ENCODE measurements at regions of chr20 and their contacts with region 1.

Region 1: GRCh38 chr20:60024801-60025200 is 66.6 kb downstream of the CDH26 start:
- DNase-seq: no peak
- H3K4me3 ChIP-seq: no peak overlapping the region
- H3K27ac ChIP-seq: no peak overlapping the region
- H3K4me1 ChIP-seq: 0 out of 7 replicates have a peak, but pooled peaks cover 0 to 2% (median 0%) of the 10 kb centered on the region in 4 experiments
- H3K27me3 ChIP-seq: peaks cover 0 to 4% (median 0%) of the 10 kb centered on the region in 4 experiments; a peak in 1 of 7 replicates
- CTCF ChIP-seq: peak; percentile 49 to 61 (median 56); a peak in 3 of 4 replicates
- EP300 ChIP-seq: no peak
- POLR2A ChIP-seq: no peak
- RAD21 ChIP-seq: peak; percentile 14 to 21; a peak in 1 of 4 replicates

Region 2: DNA sequence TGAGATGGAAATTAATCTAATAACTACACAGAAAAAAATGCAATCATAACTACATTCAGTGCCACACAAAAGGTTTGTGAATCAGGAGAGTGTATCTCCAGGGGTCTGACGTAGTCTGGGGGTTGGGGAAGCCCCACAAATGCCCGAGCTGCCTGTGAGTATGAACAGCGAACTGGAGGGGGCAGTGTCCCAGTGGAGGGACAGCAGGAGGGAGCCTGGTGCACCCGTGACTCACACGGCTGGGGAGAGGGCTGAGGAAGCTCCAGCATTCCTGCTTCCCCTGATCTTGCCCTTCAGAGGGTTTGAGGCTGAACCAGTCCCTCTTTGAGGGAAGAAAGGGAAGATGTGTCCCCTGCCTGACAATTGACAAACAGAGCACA is 12.3 kb after region 1 on chr20:
- CTCF ChIA-PET with region 1: interaction called, 11 read pairs
- POLR2A ChIA-PET with region 1: interaction called, 3 read pairs
- DNase-seq: no peak
- H3K4me3 ChIP-seq: no peak overlapping the region
- H3K27ac ChIP-seq: no peak overlapping the region
- H3K4me1 ChIP-seq: no peaks in the 10 kb centered on the region
- H3K27me3 ChIP-seq: no peaks in the 10 kb centered on the region
- CTCF ChIP-seq: peak; percentile 17 to 41 (median 33); a peak in 2 of 4 replicates
- EP300 ChIP-seq: no peak
- POLR2A ChIP-seq: no peak
- RAD21 ChIP-seq: no peak

Measured in H1 (cell line).